Activated B cell treated with CpG ODN at 0.5 μM for 24 hours (primary cell): ENCODE measurements at regions of chr5 and their contacts with region 1.

Region 1: GRCh38 chr5:88889189-88890069 is 6.4 kb upstream of the MEF2C start:
- DNase-seq: peak; percentile 61
- ATAC-seq: peak; percentile 58
- H3K4me3 Mint-ChIP-seq: peak overlapping the region; percentile 98
- H3K27ac Mint-ChIP-seq: peak overlapping the region; percentile 99
- H3K4me1 Mint-ChIP-seq: peaks cover 66% of the 10 kb centered on the region
- H3K27me3 Mint-ChIP-seq: no peaks in the 10 kb centered on the region
- CTCF ChIP-seq: no peak

Region 2: GRCh38 chr5:88826646-88827585 is 62.5 kb before region 1 on chr5:
- CTCF ChIA-PET with region 1: interaction called, 4 read pairs
- POLR2A ChIA-PET with region 1: interaction called, 200 read pairs
- intact Hi-C with region 1: no loop called
- DNase-seq: peak; percentile 31
- ATAC-seq: peak; percentile 77
- H3K4me3 Mint-ChIP-seq: peak overlapping the region; percentile 72
- H3K27ac Mint-ChIP-seq: peak overlapping the region; percentile 91
- H3K4me1 Mint-ChIP-seq: peaks cover 93% of the 10 kb centered on the region
- H3K27me3 Mint-ChIP-seq: no peaks in the 10 kb centered on the region
- CTCF ChIP-seq: no peak

Region 3: GRCh38 chr5:88875341-88876234 is 13.8 kb before region 1 on chr5:
- CTCF ChIA-PET with region 1: no interaction called
- POLR2A ChIA-PET with region 1: interaction called, 26 read pairs
- intact Hi-C with region 1: no loop called
- DNase-seq: no peak
- ATAC-seq: peak; percentile 45
- H3K4me3 Mint-ChIP-seq: peak overlapping the region; percentile 63
- H3K27ac Mint-ChIP-seq: peak overlapping the region; percentile 68
- H3K4me1 Mint-ChIP-seq: peaks cover 68% of the 10 kb centered on the region
- H3K27me3 Mint-ChIP-seq: no peaks in the 10 kb centered on the region
- CTCF ChIP-seq: no peak

Region 4: GRCh38 chr5:88934439-88934838 is 45.0 kb after region 1 on chr5:
- CTCF ChIA-PET with region 1: no interaction called
- POLR2A ChIA-PET with region 1: no interaction called
- intact Hi-C with region 1: no loop called
- DNase-seq: no peak
- ATAC-seq: no peak
- H3K4me3 Mint-ChIP-seq: no peak overlapping the region
- H3K27ac Mint-ChIP-seq: no peak overlapping the region
- H3K4me1 Mint-ChIP-seq: peaks cover 11% of the 10 kb centered on the region
- H3K27me3 Mint-ChIP-seq: no peaks in the 10 kb centered on the region
- CTCF ChIP-seq: no peak

Region 5: GRCh38 chr5:89043676-89044075 is 154.2 kb after region 1 on chr5:
- CTCF ChIA-PET with region 1: no interaction called
- POLR2A ChIA-PET with region 1: no interaction called
- intact Hi-C with region 1: no loop called
- DNase-seq: no peak
- ATAC-seq: no peak
- H3K4me3 Mint-ChIP-seq: no peak overlapping the region
- H3K27ac Mint-ChIP-seq: no peak overlapping the region
- H3K4me1 Mint-ChIP-seq: peaks cover 26% of the 10 kb centered on the region
- H3K27me3 Mint-ChIP-seq: no peaks in the 10 kb centered on the region
- CTCF ChIP-seq: no peak

Region 6: GRCh38 chr5:89343666-89344065 is 454.2 kb after region 1 on chr5:
- CTCF ChIA-PET with region 1: no interaction called
- POLR2A ChIA-PET with region 1: interaction called, 25 read pairs
- intact Hi-C with region 1: loop called (anchors 2 kb)
- DNase-seq: peak; percentile 29
- ATAC-seq: peak; percentile 79
- H3K4me3 Mint-ChIP-seq: peak overlapping the region; percentile 42
- H3K27ac Mint-ChIP-seq: peak overlapping the region; percentile 80
- H3K4me1 Mint-ChIP-seq: peaks cover 49% of the 10 kb centered on the region
- H3K27me3 Mint-ChIP-seq: no peaks in the 10 kb centered on the region
- CTCF ChIP-seq: no peak

Region 7: DNA sequence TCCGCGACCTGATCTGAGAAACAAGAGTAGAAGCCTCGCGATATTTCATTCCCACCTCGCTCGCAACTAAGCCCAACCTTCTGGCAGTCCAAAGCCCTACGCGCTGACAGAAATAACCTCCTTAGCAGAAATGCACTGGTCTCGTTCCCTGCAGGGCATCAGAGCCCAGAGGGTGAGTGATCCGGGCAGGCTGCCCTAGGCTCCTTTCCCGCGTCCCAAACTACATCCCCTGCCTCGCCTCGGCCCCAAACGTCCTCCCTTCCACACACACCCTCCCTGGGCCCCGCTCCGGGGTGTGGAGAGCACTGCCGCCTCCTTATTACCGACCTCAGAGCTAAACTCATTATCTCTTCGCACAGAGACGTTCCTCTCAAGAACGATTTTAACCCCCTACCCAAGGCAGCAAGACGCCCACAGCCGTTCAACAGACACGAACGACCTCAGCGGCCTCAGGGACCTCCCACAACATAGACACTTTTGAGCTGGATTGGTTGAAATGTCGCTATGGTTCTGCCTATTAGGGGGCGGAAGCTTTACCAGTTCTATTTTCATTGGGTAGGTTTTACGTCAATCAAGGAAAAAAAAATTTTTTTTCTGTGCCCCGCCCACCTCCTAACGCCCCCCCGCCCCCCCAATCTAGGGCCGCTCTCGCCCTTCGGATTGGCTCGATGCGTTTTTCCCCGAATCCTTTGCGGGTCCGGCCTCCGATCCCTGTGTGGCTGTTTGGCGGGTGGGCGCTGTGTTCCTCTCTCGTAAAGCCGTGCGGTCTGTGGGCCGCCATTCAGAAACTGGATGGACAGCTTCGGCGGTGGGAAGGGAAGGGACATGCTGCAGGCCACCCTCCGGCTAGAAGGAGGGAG is 1520.1 kb after region 1 on chr5 and contains the start of gene CETN3:
- CTCF ChIA-PET with region 1: no interaction called
- POLR2A ChIA-PET with region 1: interaction called, 3 read pairs
- intact Hi-C with region 1: loop called (anchors 5 kb)
- DNase-seq: peak; percentile 79
- ATAC-seq: peak; percentile 93
- H3K4me3 Mint-ChIP-seq: no peak within 1 kb of the TSS
- H3K27ac Mint-ChIP-seq: no peak within 1 kb of the TSS
- H3K4me1 Mint-ChIP-seq: peaks cover 11% of the 10 kb centered on the region
- H3K27me3 Mint-ChIP-seq: no peaks in the 10 kb centered on the region
- CTCF ChIP-seq: no peak
- total RNA-seq, gene CETN3: 19.1 and 20.3 TPM in 2 replicates